GM10248 (cell line): ENCODE measurements at regions of chr9 and their contacts with region 1.

Region 1: DNA sequence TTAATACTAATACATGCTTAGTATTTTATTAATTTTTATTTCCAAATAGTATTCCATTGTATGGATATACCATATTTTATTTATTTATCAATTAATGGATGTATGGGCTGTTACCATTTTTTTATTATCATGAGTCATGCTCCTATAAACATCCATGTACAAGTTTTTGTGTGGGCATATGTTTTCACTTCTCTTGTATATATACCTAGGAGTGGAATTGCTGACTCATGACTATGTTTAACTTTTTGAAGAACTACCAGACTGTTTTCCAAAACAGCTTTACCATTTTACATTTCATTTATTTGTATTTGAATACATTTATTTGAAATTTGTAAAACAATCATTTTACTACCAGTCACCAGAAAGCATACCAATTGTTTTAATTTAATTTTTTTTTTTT is 14.1 kb upstream of the LRRC19 start:
- DNase-seq: no peak
- CTCF ChIP-seq: no peak

Region 2: DNA sequence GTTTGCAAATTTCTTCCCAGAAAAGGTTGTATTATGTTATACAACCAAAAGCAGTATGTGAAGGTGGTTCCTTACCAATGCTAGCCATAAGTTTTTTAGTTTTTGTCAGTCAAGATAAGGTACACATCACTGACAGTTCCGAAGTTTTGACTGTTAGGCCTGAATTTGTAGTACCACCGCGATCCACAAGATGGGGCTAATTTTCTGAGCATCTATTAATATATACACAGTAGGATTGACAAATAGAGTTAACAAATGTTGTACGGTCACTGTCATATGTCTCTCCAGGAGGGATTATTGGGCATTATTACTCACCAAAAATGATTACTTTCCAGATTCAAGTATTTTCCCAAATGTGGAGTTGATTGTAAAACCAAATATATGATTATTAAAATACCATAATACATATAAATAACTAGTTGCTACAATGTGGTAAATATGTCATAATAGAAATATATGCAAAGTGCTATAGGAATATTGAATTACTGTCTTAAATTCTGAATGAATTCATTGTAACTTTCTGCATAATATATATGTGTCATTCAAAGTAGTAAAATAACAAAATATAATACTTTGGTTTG is 14.3 kb after region 1 on chr9:
- CTCF ChIA-PET with region 1: interaction called, 15 read pairs
- POLR2A ChIA-PET with region 1: interaction called, 4 read pairs
- DNase-seq: peak; percentile 57
- CTCF ChIP-seq: peak; percentile 65